ENCODE measurements at regions of chr5 and their contacts with region 1.

Region 1: DNA sequence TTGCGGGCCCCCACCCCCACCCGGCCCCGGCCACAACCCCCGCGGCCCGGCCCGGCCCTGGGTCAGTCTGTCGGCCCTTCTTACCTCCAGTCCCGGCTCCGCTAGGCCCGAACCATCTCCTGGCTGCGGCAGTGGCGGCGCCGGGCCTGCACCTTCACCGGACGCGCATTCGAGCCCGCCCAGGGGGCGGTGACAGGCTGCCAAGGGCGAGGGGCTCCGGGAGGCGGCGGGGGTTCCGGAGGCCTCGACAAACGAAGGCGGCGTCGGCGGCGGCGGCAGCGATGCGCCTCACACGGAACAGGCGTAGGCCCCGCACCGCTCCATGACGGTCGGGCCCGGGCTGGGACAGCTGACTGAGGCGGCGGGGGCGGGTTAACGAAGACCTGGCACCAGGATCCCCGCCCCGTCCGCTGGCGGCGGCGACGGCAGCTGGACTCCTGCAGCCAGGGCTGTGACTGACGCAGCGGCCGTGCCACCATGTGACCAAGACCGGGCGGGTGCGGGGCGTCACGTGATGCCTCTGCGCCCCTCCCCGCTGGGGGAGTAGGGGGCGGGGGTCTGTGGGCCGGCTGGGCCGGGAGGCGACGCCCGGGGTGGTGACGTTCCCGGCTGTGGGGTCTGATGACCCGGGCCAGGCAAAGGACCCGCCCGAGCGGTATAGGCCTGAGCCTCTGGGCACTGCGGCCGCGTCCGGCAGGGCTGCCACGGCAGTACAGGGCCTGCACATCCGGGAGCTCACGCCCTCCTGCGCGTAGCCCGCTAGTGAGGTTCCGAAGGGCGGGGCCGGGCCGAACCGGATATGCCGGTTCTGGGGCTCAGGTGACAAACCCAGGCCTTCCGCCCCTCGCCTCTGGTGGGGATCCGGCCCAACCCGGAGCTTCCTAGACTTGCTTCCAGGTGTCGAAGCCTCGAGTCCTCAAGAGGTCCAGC is at the start of gene AFF4:
- DNase-seq: peak; percentile 92
- ATAC-seq: peak; percentile 96
- H3K4me3 ChIP-seq: peak within 1 kb of the TSS; percentile 78 to 86 (median 84)
- H3K27ac ChIP-seq: peak within 1 kb of the TSS; percentile 85
- H3K4me1 ChIP-seq: peaks cover 40% of the 10 kb centered on the region
- H3K27me3 ChIP-seq: no peaks in the 10 kb centered on the region; a peak in 1 of 5 replicates
- CTCF ChIP-seq: no peak
- EP300 ChIP-seq: no peak; a peak in 1 of 4 replicates
- POLR2A ChIP-seq: peak; percentile 95 to 96
- RAD21 ChIP-seq: peak; percentile 30; the same call in 1 of the 2 replicates
- total RNA-seq, gene AFF4: 22.1 and 30.5 TPM in 2 replicates

Region 2: GRCh38 chr5:132952822-132953540 is 10.5 kb before region 1 on chr5:
- CTCF ChIA-PET with region 1: no interaction called
- POLR2A ChIA-PET with region 1: no interaction called
- in situ Hi-C with region 1: no loop called
- intact Hi-C with region 1: no loop called
- DNase-seq: no peak
- ATAC-seq: no peak
- H3K4me3 ChIP-seq: no peak overlapping the region
- H3K27ac ChIP-seq: no peak overlapping the region
- H3K4me1 ChIP-seq: peaks cover 30% of the 10 kb centered on the region
- H3K27me3 ChIP-seq: no peaks in the 10 kb centered on the region
- CTCF ChIP-seq: no peak
- EP300 ChIP-seq: no peak
- POLR2A ChIP-seq: no peak
- RAD21 ChIP-seq: no peak

Region 3: DNA sequence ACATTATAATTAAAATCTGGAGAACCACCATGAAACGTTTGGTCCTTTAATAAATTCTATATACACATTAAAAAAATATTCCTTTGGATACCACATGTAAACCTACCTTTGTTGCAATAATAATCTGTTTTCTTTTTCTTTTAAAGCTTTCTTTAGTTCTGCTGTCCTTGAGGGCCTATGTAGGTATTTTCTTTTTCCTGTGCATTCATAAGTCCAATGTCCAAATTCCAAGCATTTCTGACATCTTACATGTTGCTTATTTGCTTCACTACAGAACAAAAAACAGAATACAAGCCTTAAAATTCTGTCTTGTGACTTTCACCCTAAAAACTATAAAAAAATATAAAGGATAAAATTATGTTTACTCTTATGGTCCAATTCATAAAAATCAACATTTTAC is 43.2 kb after region 1 on chr5:
- CTCF ChIA-PET with region 1: no interaction called
- POLR2A ChIA-PET with region 1: interaction called, 10 read pairs
- in situ Hi-C with region 1: no loop called
- intact Hi-C with region 1: no loop called
- DNase-seq: peak; percentile 81
- ATAC-seq: peak; percentile 66; the same call in 2 of the 3 replicates
- H3K4me3 ChIP-seq: no peak overlapping the region; a peak in 1 of 6 replicates
- H3K27ac ChIP-seq: peak overlapping the region; percentile 70
- H3K4me1 ChIP-seq: peaks cover 25% of the 10 kb centered on the region
- H3K27me3 ChIP-seq: no peaks in the 10 kb centered on the region
- CTCF ChIP-seq: no peak
- EP300 ChIP-seq: peak in 1 of 2 experiments; percentile 41; a peak in 1 of 4 replicates
- POLR2A ChIP-seq: no peak
- RAD21 ChIP-seq: no peak

Region 4: DNA sequence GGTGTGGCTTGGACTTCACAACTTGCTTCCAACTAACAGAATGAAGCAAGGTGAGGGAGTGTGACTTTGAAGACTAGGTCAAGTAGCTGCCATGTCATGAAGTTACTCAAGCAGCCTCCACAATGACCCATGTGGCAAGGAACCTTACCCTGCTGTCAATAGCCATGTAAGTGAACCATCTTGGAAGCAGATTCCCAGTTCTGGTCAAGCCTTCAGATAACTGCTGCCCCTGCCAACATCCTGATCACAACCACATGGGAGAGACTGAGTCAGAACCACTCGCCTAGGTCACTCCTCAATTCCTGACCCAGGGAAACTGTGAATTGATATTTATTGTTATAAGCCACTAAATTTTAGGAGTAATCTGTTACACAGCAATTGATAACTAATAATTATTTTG is 52.0 kb after region 1 on chr5:
- CTCF ChIA-PET with region 1: no interaction called
- POLR2A ChIA-PET with region 1: interaction called, 20 read pairs
- in situ Hi-C with region 1: no loop called
- intact Hi-C with region 1: no loop called
- DNase-seq: no peak
- ATAC-seq: no peak
- H3K4me3 ChIP-seq: no peak overlapping the region
- H3K27ac ChIP-seq: no peak overlapping the region
- H3K4me1 ChIP-seq: peaks cover 22% of the 10 kb centered on the region
- H3K27me3 ChIP-seq: no peaks in the 10 kb centered on the region
- CTCF ChIP-seq: no peak
- EP300 ChIP-seq: no peak
- POLR2A ChIP-seq: no peak
- RAD21 ChIP-seq: no peak

Region 5: GRCh38 chr5:133025804-133026663 is 62.6 kb after region 1 on chr5 and contains the start of gene ZCCHC10:
- CTCF ChIA-PET with region 1: no interaction called
- POLR2A ChIA-PET with region 1: interaction called, 28 read pairs
- in situ Hi-C with region 1: no loop called
- intact Hi-C with region 1: loop called (anchors 5 kb)
- DNase-seq: peak; percentile 86
- ATAC-seq: peak; percentile 91
- H3K4me3 ChIP-seq: peak within 1 kb of the TSS; percentile 67 to 99 (median 98)
- H3K27ac ChIP-seq: peak within 1 kb of the TSS; percentile 92
- H3K4me1 ChIP-seq: peaks cover 53% of the 10 kb centered on the region
- H3K27me3 ChIP-seq: peaks cover 0 to 2% of the 10 kb centered on the region in 2 experiments; a peak in 1 of 5 replicates
- CTCF ChIP-seq: no peak
- EP300 ChIP-seq: no peak
- POLR2A ChIP-seq: peak; percentile 70 to 80
- RAD21 ChIP-seq: peak; percentile 24; the same call in 1 of the 2 replicates
- total RNA-seq, gene ZCCHC10: 40.7 and 54.8 TPM in 2 replicates

Region 6: DNA sequence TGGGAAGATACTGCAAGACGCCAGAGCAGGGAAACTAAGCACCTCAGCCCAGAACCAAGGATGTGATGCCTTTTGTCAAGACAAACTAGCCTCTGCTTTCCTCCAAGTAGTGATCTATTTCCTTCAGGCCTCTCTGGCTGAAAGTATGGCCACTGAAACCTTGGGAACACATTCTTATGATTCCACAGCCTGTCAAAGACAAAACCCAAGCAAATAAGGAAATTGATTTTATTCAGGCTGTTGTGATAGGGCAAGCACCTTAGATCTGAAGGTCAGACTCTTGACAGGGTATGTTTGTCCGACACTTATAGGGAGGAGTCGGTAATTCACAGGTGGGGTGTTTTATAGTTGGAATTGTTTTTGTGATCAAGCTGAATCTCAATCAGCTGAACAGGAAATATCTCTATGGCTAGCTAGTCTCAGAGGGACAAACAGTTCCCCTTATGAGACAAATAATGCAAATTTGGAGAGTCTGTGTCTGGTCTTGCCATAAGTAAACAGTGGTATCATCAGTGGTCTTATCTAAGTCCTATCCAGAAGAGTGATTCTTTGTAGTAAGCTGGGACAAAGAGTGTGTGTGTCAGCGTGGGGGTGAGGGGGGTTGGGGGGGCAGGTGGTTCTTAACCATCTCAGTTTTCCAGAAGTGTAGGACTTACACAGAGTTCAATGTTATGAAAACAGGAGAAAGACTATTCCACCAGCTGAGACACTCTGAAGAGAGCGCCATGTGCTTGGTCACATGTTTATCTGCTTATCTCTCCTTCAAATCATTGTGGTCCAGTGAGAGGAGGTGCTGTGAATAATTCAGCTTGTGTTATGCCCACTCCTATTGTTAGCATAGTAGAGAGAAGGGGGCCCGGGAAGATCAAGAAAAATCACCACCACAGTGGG is 69.7 kb after region 1 on chr5:
- CTCF ChIA-PET with region 1: no interaction called
- POLR2A ChIA-PET with region 1: interaction called, 28 read pairs
- in situ Hi-C with region 1: no loop called
- intact Hi-C with region 1: loop called (anchors 5 kb)
- DNase-seq: peak; percentile 86
- ATAC-seq: peak; percentile 75
- H3K4me3 ChIP-seq: peak overlapping the region in 1 of 3 experiments; percentile 33; a peak in 1 of 6 replicates
- H3K27ac ChIP-seq: peak overlapping the region; percentile 41
- H3K4me1 ChIP-seq: peaks cover 87% of the 10 kb centered on the region
- H3K27me3 ChIP-seq: no peaks in the 10 kb centered on the region
- CTCF ChIP-seq: no peak
- EP300 ChIP-seq: peak in 1 of 2 experiments; percentile 18; a peak in 1 of 4 replicates
- POLR2A ChIP-seq: no peak
- RAD21 ChIP-seq: no peak

Region 7: GRCh38 chr5:133051580-133052332 is 88.3 kb after region 1 on chr5 and contains the start of gene HSPA4:
- CTCF ChIA-PET with region 1: no interaction called
- POLR2A ChIA-PET with region 1: interaction called, 68 read pairs
- in situ Hi-C with region 1: loop called (anchors 5 kb)
- intact Hi-C with region 1: loop called (anchors 2 kb)
- DNase-seq: peak; percentile 97
- ATAC-seq: peak; percentile 85
- H3K4me3 ChIP-seq: peak within 1 kb of the TSS; percentile 90 to 95 (median 94)
- H3K27ac ChIP-seq: peak within 1 kb of the TSS; percentile 100
- H3K4me1 ChIP-seq: peaks cover 69% of the 10 kb centered on the region
- H3K27me3 ChIP-seq: no peaks in the 10 kb centered on the region; a peak in 1 of 5 replicates
- CTCF ChIP-seq: 0 out of 2 replicates have a peak, but pooled peaks have one; percentile 13
- EP300 ChIP-seq: no peak; a peak in 1 of 4 replicates
- POLR2A ChIP-seq: peak; percentile 91 to 97
- RAD21 ChIP-seq: peak; percentile 6
- total RNA-seq, gene HSPA4: 231 and 359 TPM in 2 replicates